ENCODE measurements at regions of chr13 and their contacts with region 1.

Region 1: DNA sequence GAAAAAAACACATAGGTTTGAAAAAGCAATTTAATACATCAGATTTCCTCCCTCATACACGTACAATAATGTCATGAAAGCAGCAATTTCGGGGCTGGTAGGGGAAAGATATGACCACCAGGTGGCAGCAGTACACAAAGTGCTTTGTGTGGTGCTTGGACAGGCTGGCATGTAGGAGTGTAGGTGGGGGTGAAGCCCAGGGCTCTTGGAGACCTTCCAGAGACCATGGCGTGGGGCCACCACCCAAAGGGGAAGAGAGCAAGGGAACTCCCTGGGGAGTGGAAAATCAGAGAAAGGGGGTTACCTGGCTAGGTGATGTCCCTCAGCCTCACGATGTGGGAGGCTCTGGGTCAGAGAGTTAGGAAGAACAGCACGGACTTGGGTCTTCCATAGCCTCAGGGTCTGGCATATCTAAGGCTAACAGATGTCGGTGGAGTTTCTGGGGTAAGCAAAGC is 11.8 kb upstream of the CCNA1 start:
- DNase-seq: peak; percentile 93
- H3K4me3 Mint-ChIP-seq: peak overlapping the region; percentile 43
- H3K27ac Mint-ChIP-seq: peak overlapping the region; percentile 86
- H3K4me1 Mint-ChIP-seq: peaks cover 32% of the 10 kb centered on the region
- H3K27me3 Mint-ChIP-seq: peaks cover 16% of the 10 kb centered on the region

Region 2: DNA sequence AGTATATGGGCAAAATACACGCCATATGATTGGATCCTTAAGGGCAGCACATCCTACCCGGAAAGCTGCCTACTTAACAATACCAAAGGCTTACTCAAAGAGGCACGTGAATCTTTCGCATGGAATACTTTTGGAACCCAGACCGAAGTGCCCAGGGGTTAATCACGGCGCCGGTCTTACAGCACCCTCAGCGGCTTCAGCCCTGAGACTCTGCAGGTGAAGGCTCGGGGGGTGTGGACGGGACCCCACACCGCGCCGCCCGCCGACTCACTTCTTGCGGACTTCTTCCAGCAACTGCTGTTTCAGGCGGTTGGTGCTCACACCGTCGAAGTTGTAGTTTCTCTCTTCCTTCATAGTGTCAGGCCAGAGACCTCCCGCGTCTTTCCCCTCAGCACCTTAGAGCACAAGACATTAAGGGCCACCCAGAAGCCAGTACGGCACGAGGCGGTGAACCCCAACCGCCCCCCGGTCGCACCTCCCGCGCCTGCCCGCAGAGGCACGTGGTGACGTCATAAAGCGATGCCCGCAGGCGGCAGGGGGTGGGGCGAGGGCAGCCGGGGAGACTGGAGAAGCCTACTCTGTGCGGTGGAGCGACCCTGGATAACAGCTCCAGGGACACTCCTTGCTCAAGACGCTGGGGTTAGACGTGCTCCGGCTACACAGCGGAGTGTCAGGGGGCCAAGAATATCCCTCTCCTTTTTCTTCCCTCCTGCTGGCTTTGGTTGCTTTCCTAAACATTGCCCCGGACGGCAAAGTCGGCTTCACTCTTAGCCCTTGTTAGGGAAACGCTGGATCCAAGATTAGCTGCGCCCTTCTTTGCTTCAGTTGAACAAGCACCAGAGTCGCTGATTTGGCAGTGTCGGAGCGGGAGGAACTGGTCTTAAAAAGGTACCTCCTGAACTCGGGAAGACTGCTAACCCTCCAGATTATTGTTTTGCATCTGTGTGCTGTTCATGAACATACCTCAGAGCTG is 122.8 kb before region 1 on chr13 and contains the start of gene CCDC169:
- intact Hi-C with region 1: loop called (anchors 10 kb)
- DNase-seq: peak; percentile 89
- H3K4me3 Mint-ChIP-seq: peak within 1 kb of the TSS; percentile 90
- H3K27ac Mint-ChIP-seq: peak within 1 kb of the TSS; percentile 64
- H3K4me1 Mint-ChIP-seq: peaks cover 11% of the 10 kb centered on the region
- H3K27me3 Mint-ChIP-seq: peaks cover 31% of the 10 kb centered on the region
- total RNA-seq, gene CCDC169: 0.35 and 0.50 TPM in 2 replicates

Region 3: GRCh38 chr13:36377826-36378468 is 42.5 kb before region 1 on chr13:
- intact Hi-C with region 1: no loop called
- DNase-seq: no peak
- H3K4me3 Mint-ChIP-seq: no peak overlapping the region
- H3K27ac Mint-ChIP-seq: no peak overlapping the region
- H3K4me1 Mint-ChIP-seq: no peaks in the 10 kb centered on the region
- H3K27me3 Mint-ChIP-seq: no peaks in the 10 kb centered on the region

Region 4: GRCh38 chr13:36431654-36432511 is 11.4 kb after region 1 on chr13 and contains the start of gene CCNA1:
- intact Hi-C with region 1: loop called (anchors 1 kb)
- DNase-seq: peak; percentile 79
- H3K4me3 Mint-ChIP-seq: peak within 1 kb of the TSS; percentile 77
- H3K27ac Mint-ChIP-seq: no peak within 1 kb of the TSS
- H3K4me1 Mint-ChIP-seq: peaks cover 16% of the 10 kb centered on the region
- H3K27me3 Mint-ChIP-seq: peaks cover 47% of the 10 kb centered on the region
- total RNA-seq, gene CCNA1: 2.1 and 2.2 TPM in 2 replicates

Region 5: DNA sequence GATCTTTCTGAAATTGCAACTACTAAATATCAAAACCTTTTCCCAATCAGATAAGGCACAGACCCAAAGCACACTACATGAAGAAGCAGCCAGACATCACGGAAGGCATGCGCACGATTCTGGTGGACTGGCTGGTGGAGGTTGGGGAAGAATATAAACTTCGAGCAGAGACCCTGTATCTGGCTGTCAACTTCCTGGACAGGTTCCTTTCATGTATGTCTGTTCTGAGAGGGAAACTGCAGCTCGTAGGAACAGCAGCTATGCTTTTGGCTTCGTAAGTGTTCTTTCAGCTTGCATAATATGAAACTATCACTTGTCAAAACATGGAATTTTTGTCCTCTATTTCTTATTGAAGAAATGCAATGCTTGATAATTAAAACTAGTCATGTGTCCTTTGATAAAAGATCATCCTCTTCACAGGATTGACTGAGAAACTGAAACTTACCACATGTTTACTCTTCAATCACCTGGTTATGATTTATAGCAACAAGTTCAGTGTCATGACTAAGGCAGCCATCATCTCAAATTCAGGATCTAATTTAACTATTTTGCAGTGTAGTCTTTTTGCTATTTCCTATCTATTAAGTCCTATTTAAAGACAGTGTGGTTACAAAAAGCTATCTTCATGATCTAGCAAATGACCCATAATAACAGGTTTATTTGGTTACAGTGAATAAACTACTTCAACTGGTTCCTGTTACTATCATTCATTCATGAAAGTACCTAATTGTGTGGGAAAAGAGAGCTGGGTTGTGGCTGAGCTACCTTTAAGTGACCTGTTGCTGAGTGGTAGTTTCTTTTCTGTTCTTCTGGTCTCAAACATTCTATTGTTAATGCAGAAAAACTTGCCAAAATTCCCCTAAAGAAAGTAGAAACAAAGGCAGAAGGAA is 18.4 kb after region 1 on chr13:
- intact Hi-C with region 1: loop called (anchors 2 kb)
- DNase-seq: no peak
- H3K4me3 Mint-ChIP-seq: peak overlapping the region; percentile 60
- H3K27ac Mint-ChIP-seq: peak overlapping the region; percentile 26
- H3K4me1 Mint-ChIP-seq: peaks cover 24% of the 10 kb centered on the region
- H3K27me3 Mint-ChIP-seq: peaks cover 8% of the 10 kb centered on the region

Region 6: GRCh38 chr13:36475468-36475867 is 55.0 kb after region 1 on chr13:
- intact Hi-C with region 1: loop called (anchors 1 kb)
- DNase-seq: peak; percentile 64
- H3K4me3 Mint-ChIP-seq: no peak overlapping the region
- H3K27ac Mint-ChIP-seq: no peak overlapping the region
- H3K4me1 Mint-ChIP-seq: no peaks in the 10 kb centered on the region
- H3K27me3 Mint-ChIP-seq: peaks cover 1% of the 10 kb centered on the region

Region 7: DNA sequence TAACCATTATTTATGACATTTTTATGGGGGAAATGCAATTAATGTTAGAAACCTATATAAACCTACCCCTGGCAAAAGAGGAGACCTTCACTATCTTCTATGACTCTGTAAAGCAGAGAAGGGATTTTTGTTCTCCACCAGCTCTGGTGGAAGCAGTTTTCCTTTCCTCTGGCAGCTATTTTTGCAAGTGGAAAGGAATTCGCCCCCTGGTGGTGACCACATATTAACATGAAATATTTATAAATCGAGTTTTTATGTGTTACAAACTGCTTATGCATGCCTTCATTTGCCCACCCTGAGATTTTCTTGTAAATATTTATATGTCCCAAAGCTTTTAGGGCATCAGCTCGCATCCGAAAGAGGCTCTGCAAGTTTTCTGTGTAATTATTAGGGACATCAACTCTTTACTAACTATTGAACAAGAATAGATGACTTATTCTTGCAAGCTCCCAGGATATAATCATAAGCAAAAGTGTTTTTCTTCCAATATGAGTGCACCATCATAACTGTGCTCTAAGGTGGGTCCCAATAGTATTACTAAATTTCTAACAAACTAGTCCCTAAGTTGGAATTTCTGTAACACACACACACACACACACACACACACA is 315.8 kb after region 1 on chr13:
- intact Hi-C with region 1: loop called (anchors 1 kb)
- DNase-seq: peak; percentile 78
- H3K4me3 Mint-ChIP-seq: no peak overlapping the region
- H3K27ac Mint-ChIP-seq: no peak overlapping the region
- H3K4me1 Mint-ChIP-seq: no peaks in the 10 kb centered on the region
- H3K27me3 Mint-ChIP-seq: peaks cover 5% of the 10 kb centered on the region

Region 8: DNA sequence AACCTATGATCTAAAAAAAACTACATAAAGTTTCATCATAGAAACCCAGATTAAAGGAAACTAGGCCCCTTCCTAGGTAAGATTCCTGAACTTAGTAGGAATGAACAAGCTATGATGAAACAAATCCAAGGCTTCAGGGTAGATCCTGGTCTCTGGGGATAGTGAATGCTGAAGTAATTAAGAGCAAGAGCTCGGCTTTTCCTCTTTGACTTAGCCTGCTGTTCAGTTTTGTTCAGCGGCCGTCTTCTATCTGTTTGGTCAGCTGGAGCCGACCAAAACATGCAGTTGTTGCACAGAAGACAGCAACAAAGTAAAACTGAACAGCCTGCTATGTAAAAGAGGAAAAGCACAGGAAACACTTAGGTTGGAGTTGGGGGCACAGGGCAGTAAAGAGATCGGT is 354.5 kb after region 1 on chr13:
- intact Hi-C with region 1: no loop called
- DNase-seq: no peak
- H3K4me3 Mint-ChIP-seq: no peak overlapping the region
- H3K27ac Mint-ChIP-seq: no peak overlapping the region
- H3K4me1 Mint-ChIP-seq: no peaks in the 10 kb centered on the region
- H3K27me3 Mint-ChIP-seq: peaks cover 6% of the 10 kb centered on the region